ENCODE measurements at regions of chr12 and their contacts with region 1.

Region 1: DNA sequence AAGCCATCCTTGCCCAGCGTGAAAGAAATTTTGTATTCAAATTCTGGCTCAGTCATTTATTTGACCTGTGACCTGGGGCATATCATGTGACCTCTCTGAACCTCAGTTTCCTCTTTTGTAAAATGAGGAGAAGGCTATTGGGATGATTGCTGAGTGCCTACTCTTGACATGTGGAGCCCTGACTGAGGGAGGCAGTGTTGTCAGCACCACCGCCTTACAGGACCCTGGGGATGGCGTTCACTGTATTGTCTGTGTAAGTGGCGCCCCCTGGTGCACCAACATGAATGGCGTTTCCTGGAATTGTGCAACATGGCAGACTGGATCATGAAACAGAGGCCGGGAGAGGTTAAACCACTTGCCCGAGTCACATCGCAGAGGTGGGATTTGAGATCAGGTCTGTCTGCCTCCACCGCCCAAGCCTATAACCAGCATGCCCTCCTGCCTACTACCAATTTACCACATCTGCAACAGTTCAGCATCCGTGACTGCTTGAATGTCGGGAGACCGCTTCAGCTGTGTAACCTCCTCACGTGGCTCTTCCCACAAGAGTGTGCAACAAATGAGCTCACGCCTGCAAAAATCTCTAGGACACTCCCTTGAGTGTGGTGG is 20.1 kb upstream of the CCDC63 start:
- DNase-seq: peak; percentile 93
- H3K4me3 Mint-ChIP-seq: peak overlapping the region; percentile 61
- H3K27ac Mint-ChIP-seq: no peak overlapping the region
- H3K4me1 Mint-ChIP-seq: no peaks in the 10 kb centered on the region
- H3K27me3 Mint-ChIP-seq: peaks cover 31% of the 10 kb centered on the region
- CTCF ChIP-seq: peak; percentile 95

Region 2: GRCh38 chr12:110704748-110705147 is 121.9 kb before region 1 on chr12:
- CTCF ChIA-PET with region 1: interaction called, 30 read pairs
- intact Hi-C with region 1: loop called (anchors 1 kb)
- DNase-seq: peak; percentile 62
- H3K4me3 Mint-ChIP-seq: no peak overlapping the region
- H3K27ac Mint-ChIP-seq: no peak overlapping the region
- H3K4me1 Mint-ChIP-seq: peaks cover 8% of the 10 kb centered on the region
- H3K27me3 Mint-ChIP-seq: no peaks in the 10 kb centered on the region
- CTCF ChIP-seq: no peak

Region 3: GRCh38 chr12:110726708-110727369 is 99.9 kb before region 1 on chr12:
- CTCF ChIA-PET with region 1: no interaction called
- intact Hi-C with region 1: no loop called
- DNase-seq: no peak
- H3K4me3 Mint-ChIP-seq: no peak overlapping the region
- H3K27ac Mint-ChIP-seq: no peak overlapping the region
- H3K4me1 Mint-ChIP-seq: peaks cover 9% of the 10 kb centered on the region
- H3K27me3 Mint-ChIP-seq: no peaks in the 10 kb centered on the region
- CTCF ChIP-seq: no peak

Region 4: GRCh38 chr12:110741341-110742095 is 85.2 kb before region 1 on chr12:
- CTCF ChIA-PET with region 1: interaction called, 4 read pairs
- intact Hi-C with region 1: loop called (anchors 2 kb)
- DNase-seq: no peak
- H3K4me3 Mint-ChIP-seq: peak overlapping the region; percentile 96
- H3K27ac Mint-ChIP-seq: peak overlapping the region; percentile 89
- H3K4me1 Mint-ChIP-seq: peaks cover 56% of the 10 kb centered on the region
- H3K27me3 Mint-ChIP-seq: no peaks in the 10 kb centered on the region
- CTCF ChIP-seq: no peak

Measured in Calu3 (cell line).